ENCODE measurements at regions of chr5 and their contacts with region 1.

Region 1: GRCh38 chr5:41856644-41857491 is 13.4 kb downstream of the OXCT1 start:
- DNase-seq: peak in 4 of 5 donors; percentile 26 to 67 (median 63)
- H3K4me3 ChIP-seq: no peak overlapping the region
- H3K4me3 Mint-ChIP-seq: no peak overlapping the region
- H3K27ac ChIP-seq: no peak overlapping the region
- H3K27ac Mint-ChIP-seq: peak overlapping the region in 1 of 8 donors; percentile 53
- H3K4me1 ChIP-seq: no peaks in the 10 kb centered on the region
- H3K4me1 Mint-ChIP-seq: peaks cover 6 to 21% (median 12%) of the 10 kb centered on the region in 3 donors
- H3K27me3 ChIP-seq: no peaks in the 10 kb centered on the region
- H3K27me3 Mint-ChIP-seq: no peaks in the 10 kb centered on the region

Region 2: DNA sequence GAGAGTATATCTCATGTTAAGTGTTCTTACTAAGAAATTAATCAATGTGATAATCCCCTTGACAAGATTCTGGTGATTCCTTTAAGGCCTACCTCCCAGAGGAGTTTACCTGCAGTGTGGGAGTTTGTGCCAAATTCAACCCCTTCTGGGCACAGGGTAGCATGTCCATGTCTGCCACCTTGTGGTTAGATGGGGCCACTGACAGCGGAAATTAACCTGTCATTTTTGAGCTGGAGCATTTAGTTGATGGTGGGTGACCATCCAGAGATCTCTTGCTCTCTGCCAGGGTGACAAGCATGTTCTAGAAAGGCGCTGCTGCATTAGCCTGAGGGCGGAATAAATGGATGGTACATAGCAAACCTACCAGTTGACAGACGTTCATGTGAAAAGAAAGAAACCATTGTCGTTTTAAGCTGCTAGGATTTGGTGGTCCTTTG is 200.4 kb after region 1 on chr5:
- CTCF ChIA-PET with region 1: interaction called, 72 read pairs
- POLR2A ChIA-PET with region 1: no interaction called
- DNase-seq: peak; percentile 20 to 71 (median 35)
- H3K4me3 ChIP-seq: no peak overlapping the region
- H3K4me3 Mint-ChIP-seq: no peak overlapping the region
- H3K27ac ChIP-seq: no peak overlapping the region
- H3K27ac Mint-ChIP-seq: no peak overlapping the region
- H3K4me1 ChIP-seq: no peaks in the 10 kb centered on the region
- H3K4me1 Mint-ChIP-seq: peaks cover 0 to 2% (median 0%) of the 10 kb centered on the region in 3 donors
- H3K27me3 ChIP-seq: no peaks in the 10 kb centered on the region
- H3K27me3 Mint-ChIP-seq: peaks cover 0 to 5% of the 10 kb centered on the region in 2 donors